ENCODE measurements at regions of chr10 and their contacts with region 1.

Region 1: DNA sequence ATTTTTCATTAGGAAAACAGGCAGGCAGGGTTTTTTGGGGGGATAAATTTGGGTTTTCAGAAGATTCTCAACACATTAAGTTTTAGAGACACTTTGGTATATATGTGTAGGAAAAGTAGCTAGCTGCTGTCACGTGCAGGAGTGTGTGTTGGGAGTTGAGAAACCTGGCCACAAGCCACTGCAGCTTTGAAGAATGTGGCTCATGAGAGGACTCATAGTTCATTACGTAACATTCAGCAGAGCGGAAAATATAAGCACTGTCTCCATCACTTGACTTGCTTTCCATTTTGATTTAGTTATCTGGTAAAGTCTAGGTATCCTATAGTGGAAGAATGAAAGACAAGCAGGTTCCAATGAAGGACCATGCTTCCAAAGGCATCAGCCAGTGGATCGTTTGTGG is 31.2 kb downstream of the SMNDC1 start:
- DNase-seq: peak; percentile 42 to 48
- ATAC-seq: peak in 4 of 8 donors; percentile 31 to 63 (median 35)
- H3K4me3 ChIP-seq: peak overlapping the region in 1 of 10 donors; percentile 0
- H3K27ac ChIP-seq: peak overlapping the region; percentile 20 to 88 (median 60)
- H3K4me1 ChIP-seq: peaks cover 15 to 97% (median 65%) of the 10 kb centered on the region in 9 donors
- H3K27me3 ChIP-seq: no peaks in the 10 kb centered on the region
- CTCF ChIP-seq: no peak

Region 2: DNA sequence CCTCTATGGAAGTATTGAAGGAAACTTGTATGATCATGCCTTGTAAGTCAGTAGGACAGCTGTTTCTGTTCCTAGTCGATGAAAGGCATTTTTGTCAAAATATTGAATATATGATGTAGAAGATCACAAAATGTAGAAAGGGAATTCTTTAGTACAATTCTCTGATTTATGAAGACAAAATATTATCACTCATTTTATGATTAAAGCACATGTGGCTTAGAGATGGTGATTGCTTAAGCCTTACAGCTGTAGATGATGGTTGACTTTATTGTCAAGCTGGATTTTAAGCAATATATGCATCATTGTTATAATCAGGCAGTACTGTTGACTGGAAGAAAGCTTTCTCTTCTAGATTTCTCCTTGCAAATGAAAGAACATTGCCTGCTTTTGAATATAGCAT is 39.6 kb before region 1 on chr10:
- intact Hi-C with region 1: loop called in 8 of 10 experiments (anchors 5 kb)
- DNase-seq: no peak
- ATAC-seq: no peak
- H3K4me3 ChIP-seq: no peak overlapping the region
- H3K27ac ChIP-seq: no peak overlapping the region
- H3K4me1 ChIP-seq: peaks cover 0 to 50% (median 26%) of the 10 kb centered on the region in 9 donors
- H3K27me3 ChIP-seq: no peaks in the 10 kb centered on the region
- CTCF ChIP-seq: no peak

Measured in heart right ventricle (tissue), 16 donors.